CD8-positive, alpha-beta T cell (primary cell): ENCODE measurements at regions of chr9 and their contacts with region 1.

Region 1: DNA sequence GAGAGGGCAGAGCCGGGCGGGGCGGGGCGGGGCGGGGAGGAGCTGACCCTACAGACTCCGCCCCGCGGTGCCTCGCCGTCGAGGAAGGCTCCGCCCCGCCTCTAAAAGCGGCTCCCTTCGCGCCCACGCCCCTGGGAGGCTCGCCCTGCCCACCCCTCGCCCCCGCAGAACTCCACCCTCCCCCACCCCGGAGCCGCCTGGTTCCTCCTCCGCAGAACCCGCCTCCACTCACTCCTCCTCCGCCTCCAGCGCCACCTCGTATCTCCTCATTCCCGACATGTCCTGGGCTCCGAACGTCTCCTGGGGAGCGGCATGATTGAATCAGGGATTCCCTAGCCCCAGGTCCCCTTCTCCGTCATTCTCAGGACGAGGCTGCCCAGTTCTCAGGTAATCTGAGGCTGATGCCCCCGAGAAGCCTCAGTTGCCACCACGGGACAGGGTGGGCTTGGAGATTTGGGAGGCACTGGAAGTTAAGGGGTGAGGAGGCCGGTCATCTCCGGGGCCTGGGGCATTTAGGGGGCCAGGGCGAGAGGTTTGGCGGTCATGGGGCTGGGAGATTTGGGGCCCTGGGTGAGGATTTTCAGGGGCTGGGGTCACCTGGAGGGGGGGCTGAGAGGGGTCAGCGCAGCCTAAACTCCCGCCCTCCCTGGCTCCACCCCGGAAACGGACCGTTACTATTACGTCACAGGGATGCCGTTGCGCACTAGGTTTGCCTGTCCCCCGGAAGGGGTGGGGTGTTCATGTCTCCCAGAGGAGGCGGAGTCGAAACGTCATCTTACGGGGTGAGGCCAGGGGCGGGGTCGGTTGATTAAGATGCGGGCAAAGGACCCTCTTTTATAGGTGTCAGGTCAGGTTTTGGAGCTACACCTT is 3.2 kb upstream of the CCL27 start:
- DNase-seq: peak; percentile 75 to 96 (median 89)
- ATAC-seq: peak; percentile 83
- H3K4me3 ChIP-seq: peak overlapping the region; percentile 86 to 93
- H3K4me3 Mint-ChIP-seq: peak overlapping the region; percentile 92
- H3K27ac ChIP-seq: peak overlapping the region; percentile 96 to 99
- H3K27ac Mint-ChIP-seq: peak overlapping the region; percentile 97
- H3K4me1 ChIP-seq: peaks cover 37% of the 10 kb centered on the region
- H3K4me1 Mint-ChIP-seq: peaks cover 36% of the 10 kb centered on the region
- H3K27me3 ChIP-seq: no peaks in the 10 kb centered on the region
- H3K27me3 Mint-ChIP-seq: no peaks in the 10 kb centered on the region
- CTCF ChIP-seq: no peak

Region 2: DNA sequence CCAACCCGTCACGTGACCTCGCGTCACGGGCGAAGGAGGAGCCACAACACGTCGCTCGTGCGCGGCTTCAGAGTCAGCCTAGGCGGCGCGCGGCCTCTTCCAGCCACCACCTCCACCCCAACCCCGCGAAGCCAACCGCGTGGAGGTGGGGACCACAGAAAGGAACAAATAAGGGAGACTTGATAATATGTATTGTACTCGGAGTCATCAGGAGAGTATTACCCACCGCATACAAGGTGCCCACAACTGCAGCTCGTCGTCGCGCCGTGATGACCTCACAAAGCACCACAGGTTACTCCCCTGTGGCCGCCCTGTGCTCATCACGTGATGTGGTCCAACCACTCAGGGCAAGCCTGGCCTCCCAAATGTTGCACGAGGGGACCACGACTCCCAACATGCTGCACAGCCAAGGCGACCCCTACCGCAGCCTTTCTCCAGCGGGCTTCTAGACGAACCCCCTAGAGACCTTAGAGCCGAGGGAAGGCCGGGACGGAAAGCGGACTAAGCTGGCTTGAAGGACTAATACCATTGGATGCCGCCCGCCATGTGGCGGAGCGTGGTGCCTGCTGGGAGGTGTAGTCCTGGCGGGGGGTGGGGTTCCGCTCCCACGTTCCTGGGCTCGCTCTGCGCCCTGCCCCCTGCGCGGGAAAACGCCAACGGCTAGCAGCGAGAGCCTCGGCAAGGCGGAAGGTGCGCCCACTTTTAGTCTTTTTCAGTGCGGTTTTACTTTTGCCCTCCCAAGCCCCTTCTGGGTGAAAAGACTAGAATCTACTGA is 616.5 kb before region 1 on chr9:
- CTCF ChIA-PET with region 1: no interaction called
- POLR2A ChIA-PET with region 1: no interaction called
- intact Hi-C with region 1: loop called (anchors 2 to 5 kb)
- DNase-seq: peak; percentile 92 to 99 (median 97)
- ATAC-seq: peak; percentile 81
- H3K4me3 ChIP-seq: peak overlapping the region; percentile 76 to 79
- H3K4me3 Mint-ChIP-seq: peak overlapping the region; percentile 97
- H3K27ac ChIP-seq: peak overlapping the region; percentile 87 to 95
- H3K27ac Mint-ChIP-seq: peak overlapping the region; percentile 100
- H3K4me1 ChIP-seq: peaks cover 23% of the 10 kb centered on the region
- H3K4me1 Mint-ChIP-seq: peaks cover 29% of the 10 kb centered on the region
- H3K27me3 ChIP-seq: no peaks in the 10 kb centered on the region
- H3K27me3 Mint-ChIP-seq: no peaks in the 10 kb centered on the region
- CTCF ChIP-seq: no peak

Region 3: GRCh38 chr9:34458013-34458958 is 207.3 kb before region 1 on chr9 and contains the starts of genes DNAI1 and FAM219A:
- CTCF ChIA-PET with region 1: no interaction called
- POLR2A ChIA-PET with region 1: no interaction called
- intact Hi-C with region 1: loop called (anchors 1 kb)
- DNase-seq: peak; percentile 98 to 99 (median 99)
- ATAC-seq: peak; percentile 96
- H3K4me3 ChIP-seq: peak within 1 kb of the TSS; percentile 61 to 67
- H3K4me3 Mint-ChIP-seq: peak within 1 kb of the TSS; percentile 91
- H3K27ac ChIP-seq: peak within 1 kb of the TSS in 1 of 2 experiments; percentile 29
- H3K27ac Mint-ChIP-seq: peak within 1 kb of the TSS; percentile 46
- H3K4me1 ChIP-seq: peaks cover 14% of the 10 kb centered on the region
- H3K4me1 Mint-ChIP-seq: peaks cover 30% of the 10 kb centered on the region
- H3K27me3 ChIP-seq: no peaks in the 10 kb centered on the region
- H3K27me3 Mint-ChIP-seq: no peaks in the 10 kb centered on the region
- CTCF ChIP-seq: no peak
- total RNA-seq, gene DNAI1: not detected
- total RNA-seq, gene FAM219A: 5.5 to 5.9 TPM

Region 4: DNA sequence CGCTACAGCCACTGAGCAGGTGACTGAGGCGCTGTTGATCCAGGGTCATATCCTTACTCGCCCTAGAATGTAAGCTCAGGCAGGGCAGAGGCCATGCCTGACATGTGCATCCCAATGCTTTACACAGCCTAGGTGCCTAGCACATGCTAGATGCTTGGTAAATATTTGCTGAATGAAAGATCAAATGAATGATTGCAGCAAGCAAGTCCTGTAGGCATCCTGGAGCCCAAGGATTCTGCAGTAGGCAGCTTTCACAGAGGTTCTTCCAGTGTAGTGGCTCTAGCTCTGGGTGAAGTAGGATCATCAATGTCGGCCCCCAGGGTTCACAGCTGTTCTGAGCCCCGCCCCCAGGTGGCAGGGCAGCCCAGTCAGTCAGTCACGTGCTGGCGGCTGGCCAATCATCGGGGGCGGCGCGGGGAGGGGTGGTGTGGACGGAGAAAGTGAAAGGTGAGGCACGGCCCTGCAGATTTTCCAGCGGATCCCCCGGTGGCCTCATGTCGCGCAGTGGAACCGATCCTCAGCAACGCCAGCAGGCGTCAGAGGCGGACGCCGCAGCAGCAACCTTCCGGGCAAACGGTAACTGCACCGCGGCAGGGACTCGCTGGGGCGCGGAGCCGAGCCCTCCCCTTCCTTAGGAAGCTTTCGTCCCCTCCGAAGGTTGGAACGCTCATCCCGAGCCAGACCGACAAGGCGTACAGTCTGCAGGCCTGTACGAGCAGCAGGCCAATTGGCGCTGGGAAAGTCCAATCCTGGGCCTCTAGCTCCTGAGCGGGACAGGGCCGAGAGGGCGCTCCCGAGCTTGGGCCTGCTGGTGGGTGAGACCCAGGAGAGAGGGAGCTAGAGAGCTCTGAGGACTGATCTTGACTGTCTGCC is 19.2 kb before region 1 on chr9 and contains the start of gene GALT:
- CTCF ChIA-PET with region 1: interaction called, 66 read pairs
- POLR2A ChIA-PET with region 1: interaction called, 14 read pairs
- intact Hi-C with region 1: loop called (anchors 1 kb)
- DNase-seq: peak; percentile 90 to 98 (median 97)
- ATAC-seq: peak; percentile 90
- H3K4me3 ChIP-seq: peak within 1 kb of the TSS; percentile 89 to 99
- H3K4me3 Mint-ChIP-seq: peak within 1 kb of the TSS; percentile 95
- H3K27ac ChIP-seq: peak within 1 kb of the TSS; percentile 69 to 80
- H3K27ac Mint-ChIP-seq: peak within 1 kb of the TSS; percentile 89
- H3K4me1 ChIP-seq: peaks cover 27% of the 10 kb centered on the region
- H3K4me1 Mint-ChIP-seq: peaks cover 31% of the 10 kb centered on the region
- H3K27me3 ChIP-seq: no peaks in the 10 kb centered on the region
- H3K27me3 Mint-ChIP-seq: no peaks in the 10 kb centered on the region
- CTCF ChIP-seq: peak; percentile 58
- total RNA-seq, gene GALT: 64.7 to 68.4 TPM

Region 5: DNA sequence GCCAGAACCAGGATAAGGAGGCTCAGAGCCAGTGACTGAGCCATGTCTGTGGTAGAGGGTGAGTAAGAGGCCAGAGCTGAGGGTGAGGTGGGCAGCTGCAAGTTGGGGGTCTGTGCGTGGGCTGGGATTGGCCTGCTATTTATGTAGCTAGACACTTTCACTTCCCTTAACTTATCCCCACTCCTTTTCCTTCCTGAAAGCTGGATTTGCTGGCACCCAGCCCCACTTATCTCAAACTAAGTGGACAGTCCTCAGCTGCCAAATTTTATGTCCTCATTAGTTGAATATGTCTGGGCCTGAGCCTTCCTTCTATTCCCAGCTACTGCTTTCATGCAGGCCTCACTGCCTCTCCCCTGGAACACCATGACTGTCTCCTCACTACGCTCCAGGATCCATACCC is 44.4 kb after region 1 on chr9 and contains the start of gene CCL21:
- CTCF ChIA-PET with region 1: no interaction called
- POLR2A ChIA-PET with region 1: no interaction called
- intact Hi-C with region 1: no loop called
- DNase-seq: no peak
- ATAC-seq: no peak
- H3K4me3 ChIP-seq: no peak within 1 kb of the TSS
- H3K4me3 Mint-ChIP-seq: no peak within 1 kb of the TSS
- H3K27ac ChIP-seq: no peak within 1 kb of the TSS
- H3K27ac Mint-ChIP-seq: no peak within 1 kb of the TSS
- H3K4me1 ChIP-seq: no peaks in the 10 kb centered on the region
- H3K4me1 Mint-ChIP-seq: no peaks in the 10 kb centered on the region
- H3K27me3 ChIP-seq: no peaks in the 10 kb centered on the region
- H3K27me3 Mint-ChIP-seq: peaks cover 11% of the 10 kb centered on the region
- CTCF ChIP-seq: no peak
- total RNA-seq, gene CCL21: not detected

Region 6: DNA sequence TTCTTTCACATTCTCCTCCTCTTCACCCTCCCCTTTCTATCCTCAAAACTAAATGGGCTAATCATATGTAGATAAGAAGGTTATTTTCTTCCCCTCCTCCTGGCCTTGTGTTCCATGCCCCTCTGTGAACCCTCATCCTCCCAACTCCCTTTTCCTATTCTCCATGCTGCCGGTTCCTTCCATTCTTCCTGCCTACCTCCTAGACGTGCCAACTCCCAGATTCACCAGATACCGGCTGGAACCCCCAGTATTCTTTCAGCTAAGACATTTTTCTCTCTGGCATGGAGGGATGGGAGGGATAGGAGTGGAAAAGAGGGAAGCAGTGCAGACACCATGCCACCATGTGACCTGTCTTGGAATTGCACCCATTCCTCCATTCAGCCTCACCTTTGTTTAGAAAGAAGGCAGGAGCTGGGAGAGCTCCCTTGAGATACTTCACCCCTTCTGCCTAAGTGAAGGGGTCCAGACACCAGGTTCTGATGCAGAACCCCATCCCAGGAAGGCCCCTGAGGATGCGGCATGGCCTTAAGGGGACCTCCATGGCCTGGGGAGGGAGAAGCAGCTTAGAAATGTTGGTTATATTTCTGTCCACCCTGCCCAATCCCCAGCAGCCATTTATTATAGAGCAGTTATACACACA is 328.8 kb after region 1 on chr9:
- CTCF ChIA-PET with region 1: no interaction called
- POLR2A ChIA-PET with region 1: no interaction called
- intact Hi-C with region 1: loop called (anchors 1 to 5 kb)
- DNase-seq: no peak
- ATAC-seq: no peak
- H3K4me3 ChIP-seq: no peak overlapping the region
- H3K4me3 Mint-ChIP-seq: no peak overlapping the region
- H3K27ac ChIP-seq: no peak overlapping the region
- H3K27ac Mint-ChIP-seq: no peak overlapping the region
- H3K4me1 ChIP-seq: peaks cover 4% of the 10 kb centered on the region
- H3K4me1 Mint-ChIP-seq: peaks cover 8% of the 10 kb centered on the region
- H3K27me3 ChIP-seq: no peaks in the 10 kb centered on the region
- H3K27me3 Mint-ChIP-seq: no peaks in the 10 kb centered on the region
- CTCF ChIP-seq: no peak

Region 7: GRCh38 chr9:35814841-35815543 is 1149.4 kb after region 1 on chr9 and contains the start of gene HINT2:
- CTCF ChIA-PET with region 1: no interaction called
- POLR2A ChIA-PET with region 1: no interaction called
- intact Hi-C with region 1: loop called in 1 of 2 experiments (anchors 10 kb)
- DNase-seq: peak; percentile 95 to 99 (median 97)
- ATAC-seq: peak; percentile 79
- H3K4me3 ChIP-seq: peak within 1 kb of the TSS; percentile 76 to 96
- H3K4me3 Mint-ChIP-seq: peak within 1 kb of the TSS; percentile 97
- H3K27ac ChIP-seq: peak within 1 kb of the TSS; percentile 74 to 86
- H3K27ac Mint-ChIP-seq: peak within 1 kb of the TSS; percentile 87
- H3K4me1 ChIP-seq: peaks cover 31% of the 10 kb centered on the region
- H3K4me1 Mint-ChIP-seq: peaks cover 36% of the 10 kb centered on the region
- H3K27me3 ChIP-seq: no peaks in the 10 kb centered on the region
- H3K27me3 Mint-ChIP-seq: no peaks in the 10 kb centered on the region
- CTCF ChIP-seq: no peak
- total RNA-seq, gene HINT2: 10.0 to 13.6 TPM